ENCODE measurements at regions of chr1 and their contacts with region 1.

Region 1: GRCh38 chr1:19477284-19478249 is 7.8 kb downstream of the CAPZB start:
- DNase-seq: peak; percentile 69 to 71 (median 71)
- H3K4me3 ChIP-seq: peak overlapping the region; percentile 2 to 60 (median 21)
- H3K4me3 Mint-ChIP-seq: peak overlapping the region; percentile 74 to 91
- H3K27ac ChIP-seq: peak overlapping the region; percentile 83 to 92
- H3K27ac Mint-ChIP-seq: peak overlapping the region; percentile 95 to 98 (median 96)
- H3K4me1 ChIP-seq: peaks cover 60 to 74% of the 10 kb centered on the region in 2 donors
- H3K4me1 Mint-ChIP-seq: peaks cover 80% of the 10 kb centered on the region
- H3K27me3 ChIP-seq: no peaks in the 10 kb centered on the region
- H3K27me3 Mint-ChIP-seq: peaks cover 0 to 4% (median 0%) of the 10 kb centered on the region in 3 donors
- CTCF ChIP-seq: no peak

Region 2: GRCh38 chr1:19439464-19440171 is 37.9 kb before region 1 on chr1:
- intact Hi-C with region 1: loop called in 1 of 2 experiments (anchors 5 kb)
- DNase-seq: no peak
- H3K4me3 ChIP-seq: no peak overlapping the region
- H3K4me3 Mint-ChIP-seq: no peak overlapping the region
- H3K27ac ChIP-seq: no peak overlapping the region
- H3K27ac Mint-ChIP-seq: peak overlapping the region in 2 of 7 donors; percentile 60 to 62
- H3K4me1 ChIP-seq: peaks cover 32 to 35% of the 10 kb centered on the region in 2 donors
- H3K4me1 Mint-ChIP-seq: peaks cover 46% of the 10 kb centered on the region
- H3K27me3 ChIP-seq: no peaks in the 10 kb centered on the region
- H3K27me3 Mint-ChIP-seq: no peaks in the 10 kb centered on the region
- CTCF ChIP-seq: no peak